HEK293 (cell line): ENCODE measurements at regions of chrX and their contacts with region 1.

Region 1: GRCh38 chrX:41350976-41351569 is 17.1 kb downstream of the DDX3X start:
- H3K4me3 ChIP-seq: no peak overlapping the region
- H3K27ac ChIP-seq: no peak overlapping the region
- H3K4me1 ChIP-seq: no peaks in the 10 kb centered on the region
- CTCF ChIP-seq: no peak

Region 2: DNA sequence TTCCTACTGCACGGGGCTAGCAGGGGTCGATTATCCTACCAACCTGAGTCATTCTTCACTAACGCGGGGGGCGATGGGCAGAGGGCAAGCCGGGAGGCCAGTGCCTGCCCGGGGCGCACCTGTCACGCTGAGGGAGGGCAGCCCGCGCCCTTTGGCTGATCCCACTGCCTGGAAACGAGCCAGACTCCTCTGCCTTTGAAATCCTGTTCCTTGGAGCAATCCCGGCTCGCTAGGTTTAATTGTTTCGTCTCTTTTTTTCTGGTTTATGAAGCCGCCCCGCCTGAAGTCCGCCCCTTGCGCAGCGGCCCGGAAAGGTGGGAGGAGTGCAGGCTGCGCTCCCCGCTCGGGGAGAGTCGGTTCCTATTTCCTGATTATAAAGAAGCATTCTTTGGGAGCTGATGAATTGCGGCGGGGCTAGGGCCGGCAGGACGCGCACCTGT is 1737.6 kb before region 1 on chrX:
- CTCF ChIA-PET with region 1: no interaction called
- POLR2A ChIA-PET with region 1: interaction called, 10 read pairs
- H3K4me3 ChIP-seq: peak overlapping the region; percentile 25
- H3K27ac ChIP-seq: no peak overlapping the region; the same call in 1 of the 2 replicates
- H3K4me1 ChIP-seq: no peaks in the 10 kb centered on the region; the same call in 1 of the 2 replicates
- CTCF ChIP-seq: no peak

Region 3: DNA sequence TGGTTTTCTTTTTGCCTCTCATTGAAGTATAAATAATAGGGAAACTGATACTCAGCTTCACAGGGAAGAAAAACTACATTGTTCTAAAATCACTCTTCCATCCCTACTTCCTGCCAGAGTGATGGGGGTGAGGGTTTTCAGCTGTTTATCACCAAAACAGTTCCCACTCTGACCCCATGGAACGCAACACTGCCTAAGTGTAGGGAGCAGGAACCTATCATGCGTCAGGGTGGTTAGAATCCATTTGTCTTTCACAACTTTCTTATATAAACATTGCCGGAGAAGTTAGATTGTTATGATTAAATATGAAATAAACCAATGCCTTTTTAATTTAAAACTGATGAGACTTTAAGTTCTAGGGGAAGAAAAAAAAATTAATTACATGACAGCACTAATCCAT is 743.7 kb before region 1 on chrX:
- CTCF ChIA-PET with region 1: no interaction called
- POLR2A ChIA-PET with region 1: no interaction called
- H3K4me3 ChIP-seq: no peak overlapping the region
- H3K27ac ChIP-seq: no peak overlapping the region
- H3K4me1 ChIP-seq: no peaks in the 10 kb centered on the region
- CTCF ChIP-seq: no peak

Region 4: DNA sequence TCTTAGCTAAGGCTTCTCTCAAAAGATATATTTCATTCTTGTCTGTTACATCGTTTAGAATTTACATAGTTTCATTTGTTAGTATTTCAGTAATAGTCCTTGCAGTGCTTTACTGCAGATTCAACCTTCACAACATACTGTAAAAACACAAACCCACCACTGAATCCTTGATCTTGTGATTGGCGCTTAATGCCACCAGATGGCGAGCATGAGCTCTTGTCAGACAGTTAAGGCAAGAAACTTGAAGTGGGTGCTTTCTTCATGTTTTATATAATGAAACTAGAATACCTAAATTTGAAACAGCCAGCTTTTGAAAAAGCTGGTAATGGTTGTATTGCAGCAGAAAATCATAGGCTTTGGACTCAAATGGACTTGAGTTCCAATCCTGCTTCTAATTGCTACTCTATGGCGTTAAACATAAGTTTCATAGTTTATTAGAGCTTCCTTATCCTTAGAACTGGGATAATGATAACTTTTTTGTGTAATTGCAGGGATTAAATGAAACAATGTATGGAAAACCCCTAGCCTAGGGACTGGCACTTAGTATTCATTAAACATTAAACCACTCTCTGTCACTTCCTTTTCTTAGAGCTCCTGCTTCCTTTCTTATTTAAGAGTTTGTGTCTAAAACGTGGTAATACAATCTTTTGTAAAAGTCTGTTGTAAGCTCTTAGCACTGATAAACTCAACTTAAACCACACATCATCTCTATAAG is 170.7 kb before region 1 on chrX:
- CTCF ChIA-PET with region 1: no interaction called
- POLR2A ChIA-PET with region 1: no interaction called
- H3K4me3 ChIP-seq: no peak overlapping the region
- H3K27ac ChIP-seq: no peak overlapping the region
- H3K4me1 ChIP-seq: no peaks in the 10 kb centered on the region
- CTCF ChIP-seq: no peak

Region 5: GRCh38 chrX:41288641-41289040 is 62.4 kb before region 1 on chrX:
- CTCF ChIA-PET with region 1: no interaction called
- POLR2A ChIA-PET with region 1: no interaction called
- H3K4me3 ChIP-seq: no peak overlapping the region
- H3K27ac ChIP-seq: no peak overlapping the region
- H3K4me1 ChIP-seq: peaks cover 5% of the 10 kb centered on the region
- CTCF ChIP-seq: no peak